Activated T-helper 2 cell treated with anti-CD3 and anti-CD28 coated beads, Interferon-gamma antibody, Interleukin-2, Interleukin-4, amounts not matched to agents 10 μg/mL and 5 μg/mL and 100 μg/mL, durations not matched to agents 14 hours and 24 hours and 36 hours (primary cell): ENCODE measurements at regions of chr3 and their contacts with region 1.

Region 1: GRCh38 chr3:107942244-107942643 is 148.6 kb downstream of the CD47 start:
- DNase-seq: peak; percentile 15
- H3K4me3 Mint-ChIP-seq: no peak overlapping the region
- H3K27ac Mint-ChIP-seq: peak overlapping the region; percentile 78
- H3K4me1 Mint-ChIP-seq: peaks cover 23% of the 10 kb centered on the region
- H3K27me3 Mint-ChIP-seq: peaks cover under 1% of the 10 kb centered on the region

Region 2: DNA sequence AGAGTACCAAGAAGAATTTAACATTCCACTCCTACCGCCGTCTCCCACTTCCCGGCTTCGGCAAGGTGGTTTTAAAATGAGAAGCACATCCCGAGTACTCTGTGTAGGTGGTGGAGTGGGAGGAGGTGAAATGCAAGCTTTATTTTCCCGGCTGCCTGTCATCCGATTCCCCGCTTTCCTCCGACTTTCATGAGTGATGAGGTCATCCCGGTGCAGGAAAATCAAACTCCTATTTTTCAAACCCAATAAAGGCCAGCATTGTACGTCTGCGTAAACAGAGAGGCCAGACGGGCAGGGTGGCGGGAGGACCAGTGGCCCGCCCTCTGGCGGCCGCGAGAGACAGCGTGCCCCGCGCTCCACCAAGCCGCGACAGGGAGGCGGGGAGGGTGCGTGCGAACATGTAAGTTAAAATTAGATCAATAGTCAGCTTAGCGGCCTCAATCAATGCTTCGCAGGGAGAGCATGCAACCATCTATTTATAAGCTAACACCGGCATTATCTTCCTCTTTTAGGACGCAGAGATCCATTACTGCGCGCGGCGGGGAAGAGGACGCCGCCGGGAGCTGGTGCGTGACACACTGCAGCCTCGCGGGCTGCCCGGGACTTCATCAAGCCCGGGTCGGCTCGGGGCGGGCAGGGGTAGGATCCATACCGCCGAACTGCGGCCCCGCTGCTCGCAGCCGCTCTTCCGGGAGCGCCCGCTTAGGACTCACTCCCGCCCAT is 14.7 kb before region 1 on chr3:
- intact Hi-C with region 1: loop called (anchors 1 kb)
- DNase-seq: peak; percentile 56
- H3K4me3 Mint-ChIP-seq: peak overlapping the region; percentile 90
- H3K27ac Mint-ChIP-seq: peak overlapping the region; percentile 77
- H3K4me1 Mint-ChIP-seq: peaks cover 15% of the 10 kb centered on the region
- H3K27me3 Mint-ChIP-seq: peaks cover 14% of the 10 kb centered on the region

Region 3: GRCh38 chr3:108124337-108125152 is 182.3 kb after region 1 on chr3:
- intact Hi-C with region 1: loop called (anchors 1 kb)
- DNase-seq: peak; percentile 68
- H3K4me3 Mint-ChIP-seq: peak overlapping the region; percentile 96
- H3K27ac Mint-ChIP-seq: peak overlapping the region; percentile 99
- H3K4me1 Mint-ChIP-seq: peaks cover 66% of the 10 kb centered on the region
- H3K27me3 Mint-ChIP-seq: no peaks in the 10 kb centered on the region

Region 4: GRCh38 chr3:108301695-108302404 is 359.6 kb after region 1 on chr3:
- intact Hi-C with region 1: loop called (anchors 5 kb)
- DNase-seq: no peak
- H3K4me3 Mint-ChIP-seq: peak overlapping the region; percentile 37
- H3K27ac Mint-ChIP-seq: peak overlapping the region; percentile 81
- H3K4me1 Mint-ChIP-seq: peaks cover 50% of the 10 kb centered on the region
- H3K27me3 Mint-ChIP-seq: no peaks in the 10 kb centered on the region